Dorsolateral prefrontal cortex (tissue), 120 donors: ENCODE measurements at regions of chrX and their contacts with region 1.

Region 1: DNA sequence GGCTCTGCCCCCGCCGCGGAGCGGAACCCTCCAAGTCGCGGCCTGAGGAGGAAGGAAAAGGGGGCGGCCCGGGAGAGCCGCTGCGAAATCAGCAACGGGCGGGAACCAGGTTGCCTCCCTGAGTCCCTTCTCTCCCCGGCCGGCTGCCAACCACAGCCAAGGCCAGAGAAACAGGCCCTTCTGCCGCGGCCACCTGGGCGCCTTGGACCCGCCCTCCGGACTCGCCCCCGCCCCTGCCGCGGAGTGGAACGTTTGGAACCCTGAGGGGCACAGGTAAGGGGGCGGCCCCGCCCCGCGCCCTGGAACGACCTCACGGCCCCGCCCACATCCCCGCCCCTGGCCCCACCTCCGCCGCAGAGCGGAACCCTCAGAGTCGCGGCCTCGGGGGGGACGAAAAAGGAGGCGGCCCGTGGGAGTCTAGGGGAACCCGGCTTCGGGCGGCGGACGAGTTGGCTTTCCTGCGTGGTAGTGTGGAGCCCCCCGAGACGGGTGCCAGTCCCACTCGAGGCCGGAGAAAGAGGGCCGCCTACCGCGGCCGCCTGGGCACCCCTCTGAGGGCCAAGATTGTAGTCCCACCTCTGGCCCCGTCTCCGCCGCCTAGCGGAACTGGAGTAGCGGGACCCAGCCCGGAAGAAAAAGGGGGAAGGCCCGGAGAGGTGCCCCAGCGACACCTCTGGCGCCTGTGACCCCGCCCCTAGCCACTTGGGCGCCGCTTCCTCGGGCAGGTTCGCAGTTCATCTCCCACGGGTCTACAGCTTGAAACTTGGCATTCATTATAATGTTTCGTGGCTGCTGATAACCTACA is 669 bp upstream of the PHKA2 start:
- DNase-seq: peak; percentile 57 to 82 (median 68)
- H3K4me3 ChIP-seq: peak overlapping the region; percentile 35 to 84 (median 72)
- H3K27ac ChIP-seq: peak overlapping the region in 55 of 59 donors; percentile 10 to 92 (median 82)
- H3K27me3 ChIP-seq: peaks cover 0 to 66% (median 22%) of the 10 kb centered on the region in 45 donors
- CTCF ChIP-seq: peak in 55 of 56 donors; percentile 22 to 70 (median 49)

Region 2: DNA sequence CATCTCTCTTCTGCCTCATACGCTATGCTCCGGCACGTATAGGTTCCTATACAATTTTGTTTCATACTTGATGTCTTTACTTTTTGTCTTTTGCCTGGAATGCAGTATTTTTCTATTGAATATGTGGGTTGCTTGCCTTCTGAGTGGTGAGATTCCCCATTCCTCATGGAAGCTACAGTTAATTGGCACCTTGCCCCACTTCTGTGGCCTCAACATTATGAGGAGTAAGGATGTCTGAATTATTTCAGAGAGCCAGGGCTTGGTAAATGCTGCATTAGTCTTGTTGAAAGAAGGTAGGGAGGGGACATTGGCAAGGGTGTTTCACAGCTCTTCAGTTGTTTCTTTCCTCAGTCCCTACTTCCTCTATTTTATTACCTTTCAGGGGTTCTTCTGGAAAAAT is 536.2 kb before region 1 on chrX:
- intact Hi-C with region 1: no loop called
- DNase-seq: no peak
- H3K4me3 ChIP-seq: no peak overlapping the region
- H3K27ac ChIP-seq: no peak overlapping the region
- H3K27me3 ChIP-seq: peaks cover 0 to 36% (median 0%) of the 10 kb centered on the region in 45 donors
- CTCF ChIP-seq: no peak

Region 3: GRCh38 chrX:18931972-18932371 is 52.6 kb before region 1 on chrX:
- intact Hi-C with region 1: loop called in 1 of 2 experiments (anchors 5 kb)
- DNase-seq: no peak
- H3K4me3 ChIP-seq: no peak overlapping the region
- H3K27ac ChIP-seq: no peak overlapping the region
- H3K27me3 ChIP-seq: peaks cover 0 to 61% (median 16%) of the 10 kb centered on the region in 45 donors
- CTCF ChIP-seq: peak in 53 of 56 donors; percentile 14 to 68 (median 46)